PC-3 (cell line): ENCODE measurements at regions of chr4 and their contacts with region 1.

Region 1: DNA sequence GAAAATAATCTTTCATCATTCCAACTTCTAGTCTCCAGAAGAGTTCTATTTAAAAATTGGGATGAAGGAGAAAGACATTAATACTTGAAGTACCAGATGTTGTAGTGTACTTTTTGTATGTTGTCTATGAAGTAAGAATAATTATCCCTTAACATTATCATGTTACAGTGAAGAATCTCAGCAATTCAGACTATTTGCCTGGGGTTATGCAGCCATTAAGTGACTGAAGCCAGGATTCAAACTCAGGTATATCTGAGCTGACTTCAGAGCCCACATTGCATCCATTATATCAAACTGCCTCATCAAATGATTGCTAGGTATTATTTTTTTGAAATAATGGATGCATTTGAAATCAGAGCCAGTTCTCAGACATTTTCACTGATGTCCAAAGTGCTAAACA is 76.1 kb upstream of the FHDC1 start:
- DNase-seq: no peak
- ATAC-seq: no peak
- H3K4me3 ChIP-seq: no peak overlapping the region
- H3K27ac ChIP-seq: no peak overlapping the region
- H3K4me1 ChIP-seq: peaks cover 6% of the 10 kb centered on the region; the same call in 1 of the 2 replicates
- H3K27me3 ChIP-seq: no peaks in the 10 kb centered on the region
- CTCF ChIP-seq: no peak

Region 2: DNA sequence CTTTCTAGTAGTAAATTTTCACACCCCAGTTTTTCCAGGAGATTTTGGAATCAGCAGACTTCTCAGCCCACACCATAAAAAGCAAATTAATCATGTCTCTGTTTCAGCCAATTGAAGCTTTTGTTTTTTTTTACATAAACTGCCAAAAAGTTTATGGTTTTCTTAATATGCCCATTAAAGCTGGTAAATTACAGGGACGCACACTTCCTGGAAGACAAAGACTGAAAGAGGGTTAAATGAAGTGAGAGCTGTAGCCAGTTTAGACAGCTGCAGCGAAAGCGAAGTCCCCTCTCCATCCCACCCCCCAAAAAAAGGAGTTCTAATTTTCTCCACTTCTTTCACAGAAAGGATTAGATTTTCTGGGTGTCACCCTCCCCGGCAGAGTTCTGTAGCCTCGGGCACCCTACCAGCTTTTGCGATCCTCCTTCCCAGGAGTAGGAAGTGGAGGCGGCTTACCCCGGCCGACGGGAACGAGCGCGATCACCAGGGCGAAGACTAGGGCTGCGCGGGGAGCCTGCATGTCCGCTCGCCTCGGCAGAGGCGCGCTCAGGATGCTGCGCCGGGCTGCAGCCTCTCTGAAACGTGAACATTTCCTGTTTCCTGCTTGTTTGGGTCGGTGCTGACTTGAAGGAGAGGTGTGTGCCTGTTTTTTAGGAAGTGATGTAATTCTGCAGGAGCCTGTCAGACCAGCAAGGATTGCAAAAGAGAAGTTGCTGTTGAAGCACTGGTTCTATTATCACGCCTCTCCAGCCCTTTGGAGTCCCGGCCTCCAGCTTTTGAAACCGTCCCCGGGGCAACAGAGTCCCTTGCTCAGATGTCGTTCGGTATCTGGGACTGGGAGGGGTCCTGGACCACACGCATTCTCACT is 180.4 kb before region 1 on chr4 and contains the start of gene TMEM154:
- CTCF ChIA-PET with region 1: no interaction called
- POLR2A ChIA-PET with region 1: interaction called, 10 read pairs
- intact Hi-C with region 1: no loop called
- DNase-seq: peak; percentile 67
- ATAC-seq: peak; percentile 65
- H3K4me3 ChIP-seq: peak within 1 kb of the TSS; percentile 82
- H3K27ac ChIP-seq: peak within 1 kb of the TSS; percentile 90
- H3K4me1 ChIP-seq: peaks cover 36% of the 10 kb centered on the region
- H3K27me3 ChIP-seq: no peaks in the 10 kb centered on the region
- CTCF ChIP-seq: no peak
- total RNA-seq, gene TMEM154: 3.6 and 8.1 TPM in 2 replicates

Region 3: DNA sequence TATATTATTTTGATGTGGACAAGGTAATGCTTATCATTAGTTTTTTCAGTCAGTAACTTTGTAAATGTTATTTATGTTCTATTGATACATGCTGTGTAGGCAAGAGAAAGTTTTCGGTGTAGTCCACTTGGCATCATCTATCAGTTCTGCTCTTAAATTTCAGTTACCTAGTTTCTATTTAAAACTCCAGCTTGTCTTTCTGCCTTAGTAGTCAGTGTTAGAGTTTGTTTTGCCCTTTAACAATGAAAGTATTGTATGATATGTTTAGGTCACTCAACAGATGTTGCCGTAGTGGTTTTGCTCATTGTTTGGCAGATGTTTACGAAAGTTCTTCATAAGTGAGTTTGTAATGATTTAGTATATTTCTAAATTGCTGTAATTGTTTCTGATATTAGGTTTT is 41.2 kb after region 1 on chr4:
- CTCF ChIA-PET with region 1: no interaction called
- POLR2A ChIA-PET with region 1: no interaction called
- intact Hi-C with region 1: loop called (anchors 5 kb)
- DNase-seq: no peak
- ATAC-seq: no peak
- H3K4me3 ChIP-seq: no peak overlapping the region
- H3K27ac ChIP-seq: 0 out of 2 replicates have a peak overlapping the region, but pooled peaks have one; percentile 18
- H3K4me1 ChIP-seq: peaks cover 4% of the 10 kb centered on the region; the same call in 1 of the 2 replicates
- H3K27me3 ChIP-seq: no peaks in the 10 kb centered on the region
- CTCF ChIP-seq: no peak

Region 4: GRCh38 chr4:153115322-153116290 is 255.6 kb after region 1 on chr4:
- CTCF ChIA-PET with region 1: no interaction called
- POLR2A ChIA-PET with region 1: no interaction called
- intact Hi-C with region 1: no loop called
- DNase-seq: peak; percentile 91
- ATAC-seq: peak; percentile 78
- H3K4me3 ChIP-seq: peak overlapping the region; percentile 54
- H3K27ac ChIP-seq: peak overlapping the region; percentile 99
- H3K4me1 ChIP-seq: peaks cover 23% of the 10 kb centered on the region
- H3K27me3 ChIP-seq: no peaks in the 10 kb centered on the region
- CTCF ChIP-seq: no peak